IMR-90 (cell line): ENCODE measurements at regions of chr11 and their contacts with region 1.

Region 1: DNA sequence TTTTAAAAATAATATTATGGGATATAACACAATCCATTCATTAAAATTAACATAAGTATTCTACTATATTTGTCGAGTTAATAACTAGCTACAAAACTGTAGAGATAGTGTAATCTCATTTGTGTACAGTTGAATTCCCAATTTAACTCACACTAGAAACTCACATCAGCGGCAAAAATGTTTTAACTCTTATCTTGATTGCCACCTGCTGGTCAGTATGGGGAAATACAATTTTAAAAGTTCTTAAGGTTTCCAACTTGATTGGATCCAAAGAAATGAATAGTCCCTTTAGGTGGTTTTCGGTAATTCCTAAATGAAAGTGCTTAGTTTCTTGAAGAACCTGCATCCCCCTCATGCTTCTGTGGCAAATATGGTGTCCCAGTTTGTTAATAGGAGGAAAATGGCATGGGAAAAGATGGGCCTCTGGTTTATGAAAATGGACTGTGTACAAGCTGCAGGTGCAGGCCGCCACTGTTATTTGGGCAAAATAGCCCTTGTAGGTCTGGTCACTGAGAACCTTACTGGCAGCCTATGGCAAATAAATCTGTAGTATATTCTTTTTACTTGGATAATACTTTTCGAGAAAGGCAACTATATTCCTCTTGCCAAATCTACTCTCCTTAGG is 33.7 kb upstream of the SLC17A6 start:
- DNase-seq: peak; percentile 23
- ATAC-seq: no peak; the same call in 1 of the 2 replicates
- H3K4me3 ChIP-seq: no peak overlapping the region
- H3K27ac ChIP-seq: no peak overlapping the region
- H3K4me1 ChIP-seq: no peaks in the 10 kb centered on the region
- H3K27me3 ChIP-seq: no peaks in the 10 kb centered on the region
- CTCF ChIP-seq: peak; percentile 59
- POLR2A ChIP-seq: no peak
- RAD21 ChIP-seq: peak; percentile 42

Region 2: DNA sequence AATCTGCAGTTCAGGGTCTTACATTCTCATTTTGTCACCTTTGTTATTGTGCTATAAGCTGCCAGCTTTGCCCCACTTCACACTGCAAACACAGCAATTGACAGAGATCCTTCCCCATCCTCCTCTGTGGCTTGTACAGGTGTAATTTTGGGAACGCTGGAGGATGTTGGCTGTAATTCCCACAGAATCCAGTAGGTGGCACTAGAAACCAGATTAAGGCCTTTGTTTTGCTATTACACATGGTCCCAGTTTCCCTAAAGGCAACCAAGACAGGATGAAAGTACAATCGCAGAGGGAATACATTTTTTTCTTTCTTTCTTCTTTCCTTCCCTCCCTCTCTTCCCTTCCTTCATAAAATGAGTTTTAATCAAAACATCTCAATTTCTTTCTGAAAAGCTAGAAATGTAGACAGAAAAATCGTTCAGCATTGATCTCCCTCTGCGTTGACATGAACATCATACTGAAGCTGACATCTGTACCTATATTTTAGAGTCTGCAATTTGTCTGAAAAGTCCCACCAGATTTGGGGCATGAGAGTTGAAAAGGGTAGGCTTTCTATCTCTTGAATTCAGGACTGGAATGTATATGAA is 1656.4 kb before region 1 on chr11:
- CTCF ChIA-PET with region 1: interaction called, 4 read pairs
- POLR2A ChIA-PET with region 1: no interaction called
- dilution Hi-C with region 1: no loop called
- in situ Hi-C with region 1: loop called (anchors 5 kb)
- intact Hi-C with region 1: loop called (anchors 1 kb)
- DNase-seq: peak; percentile 33
- ATAC-seq: peak; percentile 87
- H3K4me3 ChIP-seq: no peak overlapping the region
- H3K27ac ChIP-seq: no peak overlapping the region
- H3K4me1 ChIP-seq: no peaks in the 10 kb centered on the region
- H3K27me3 ChIP-seq: no peaks in the 10 kb centered on the region
- CTCF ChIP-seq: peak; percentile 71
- POLR2A ChIP-seq: no peak
- RAD21 ChIP-seq: peak; percentile 73

Region 3: GRCh38 chr11:21704539-21704938 is 599.9 kb before region 1 on chr11:
- CTCF ChIA-PET with region 1: no interaction called
- POLR2A ChIA-PET with region 1: no interaction called
- dilution Hi-C with region 1: no loop called
- in situ Hi-C with region 1: no loop called
- intact Hi-C with region 1: no loop called
- DNase-seq: no peak
- ATAC-seq: no peak
- H3K4me3 ChIP-seq: no peak overlapping the region
- H3K27ac ChIP-seq: no peak overlapping the region
- H3K4me1 ChIP-seq: no peaks in the 10 kb centered on the region
- H3K27me3 ChIP-seq: no peaks in the 10 kb centered on the region
- CTCF ChIP-seq: no peak
- POLR2A ChIP-seq: no peak
- RAD21 ChIP-seq: no peak